Calu3 (cell line): ENCODE measurements at regions of chr6 and their contacts with region 1.

Region 1: DNA sequence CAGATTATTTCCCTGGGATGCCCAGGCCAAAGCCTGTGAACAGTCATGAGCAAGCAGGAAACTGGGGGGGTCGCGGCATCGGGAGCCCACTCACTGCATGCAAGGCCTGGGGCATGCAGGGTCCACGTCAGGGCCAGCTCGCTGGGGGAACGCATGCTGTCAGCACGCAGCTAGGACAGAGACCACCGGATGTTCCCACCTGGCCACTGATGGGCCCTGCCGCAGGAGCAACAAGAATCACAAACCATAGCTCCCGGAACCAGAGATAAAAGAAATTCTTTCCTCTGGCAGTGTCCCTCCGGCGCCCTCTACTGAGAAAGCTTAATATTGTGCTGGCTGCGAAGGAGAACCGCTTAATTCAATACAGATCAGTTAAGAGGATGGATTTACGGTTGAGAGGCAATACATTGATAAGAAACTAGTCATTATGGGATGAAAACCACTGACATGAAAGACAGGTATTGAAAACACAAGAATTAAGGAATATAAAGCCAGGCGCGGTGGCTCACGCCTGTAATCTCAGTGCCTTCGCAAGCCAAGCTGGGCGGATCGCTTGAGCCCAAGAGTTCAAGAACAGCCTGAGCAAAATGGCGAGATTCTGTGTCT is 32.6 kb downstream of the C6orf15 start:
- DNase-seq: peak; percentile 89
- H3K4me3 Mint-ChIP-seq: no peak overlapping the region
- H3K27ac Mint-ChIP-seq: no peak overlapping the region
- H3K4me1 Mint-ChIP-seq: peaks cover 8% of the 10 kb centered on the region
- H3K27me3 Mint-ChIP-seq: no peaks in the 10 kb centered on the region
- CTCF ChIP-seq: peak; percentile 89

Region 2: DNA sequence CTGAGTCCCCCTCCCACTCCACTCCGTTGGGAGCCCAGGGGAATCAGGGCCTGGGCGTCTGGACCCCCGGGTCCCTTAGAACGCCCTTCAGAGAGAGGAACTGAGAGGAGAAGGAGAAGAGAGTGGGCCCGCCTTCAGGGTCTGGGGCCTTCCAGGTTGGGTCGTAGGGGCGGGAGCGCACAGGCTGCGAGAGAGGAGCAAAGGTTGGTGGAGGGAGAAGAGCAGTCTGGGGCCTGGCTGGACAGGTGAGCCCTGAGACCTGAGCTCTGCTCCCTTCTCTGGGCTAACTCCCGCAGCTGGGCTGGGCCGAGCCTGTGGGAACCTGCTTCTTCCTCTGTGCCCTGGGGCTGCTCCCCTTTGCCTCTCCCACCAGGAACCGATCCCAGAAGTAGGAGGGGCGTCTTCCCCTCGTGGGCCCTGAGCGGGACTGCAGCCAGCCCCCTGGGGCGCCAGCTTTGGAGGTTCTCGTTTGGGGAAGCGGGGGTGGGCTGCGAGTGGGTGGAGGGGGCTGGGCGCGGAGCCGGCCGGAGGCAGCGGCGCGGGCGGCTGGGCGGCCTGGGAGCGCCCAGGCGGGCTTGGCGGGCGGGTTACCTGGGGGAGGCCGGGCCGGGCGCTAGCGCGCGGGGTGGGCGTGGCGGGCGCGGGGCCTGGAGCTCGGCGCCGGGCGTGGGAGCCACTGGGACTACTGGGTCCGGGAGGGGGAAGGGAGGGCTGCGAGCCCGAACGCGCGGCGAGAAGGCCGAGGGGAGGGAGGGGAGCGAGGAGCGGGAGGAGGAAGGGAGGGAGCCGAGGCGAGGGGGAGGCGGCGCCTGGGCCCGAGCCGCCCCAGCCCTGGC is 195.9 kb before region 1 on chr6 and contains the start of gene DDR1:
- CTCF ChIA-PET with region 1: interaction called, 15 read pairs
- intact Hi-C with region 1: no loop called
- DNase-seq: peak; percentile 82
- H3K4me3 Mint-ChIP-seq: peak within 1 kb of the TSS; percentile 89
- H3K27ac Mint-ChIP-seq: peak within 1 kb of the TSS; percentile 94
- H3K4me1 Mint-ChIP-seq: peaks cover 63% of the 10 kb centered on the region
- H3K27me3 Mint-ChIP-seq: peaks cover 16% of the 10 kb centered on the region
- CTCF ChIP-seq: no peak
- total RNA-seq, gene DDR1: 489 and 580 TPM in 2 replicates

Region 3: DNA sequence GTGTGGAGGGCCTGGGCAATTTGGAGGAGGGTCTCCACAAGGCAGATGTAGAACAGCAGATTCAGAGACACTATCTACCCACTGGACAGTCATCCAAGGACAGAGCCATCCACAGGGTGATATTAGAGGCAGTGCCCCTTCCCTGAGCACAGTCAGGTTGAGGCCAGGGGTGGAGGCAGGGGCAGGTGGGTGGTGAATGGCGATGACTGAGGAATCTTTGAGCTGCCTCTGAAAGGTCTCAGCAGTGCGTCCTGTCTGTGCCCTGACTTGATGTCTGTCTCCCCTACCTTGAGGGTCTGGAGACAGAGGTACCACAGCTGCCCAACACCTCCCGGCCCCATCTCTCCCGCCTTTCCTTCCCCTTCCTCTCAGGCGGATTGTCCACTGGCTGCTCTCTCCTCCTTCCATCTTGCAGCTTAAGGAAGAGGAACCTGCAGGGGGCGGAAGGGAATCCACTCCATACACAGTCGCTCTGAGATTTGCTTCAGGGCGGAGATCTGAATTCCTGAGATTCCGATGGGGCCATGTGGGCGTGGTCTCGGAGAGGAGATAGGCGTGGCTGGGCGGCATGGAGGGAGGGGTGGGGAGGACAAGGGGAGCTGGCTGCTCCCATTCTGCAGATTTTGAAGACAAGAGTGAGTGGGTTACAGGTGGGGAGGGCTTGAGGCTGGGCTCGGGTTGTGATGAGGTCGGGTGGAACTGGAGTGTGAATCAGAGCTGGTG is 137.3 kb before region 1 on chr6:
- CTCF ChIA-PET with region 1: interaction called, 10 read pairs
- intact Hi-C with region 1: no loop called
- DNase-seq: peak; percentile 99
- H3K4me3 Mint-ChIP-seq: peak overlapping the region; percentile 29
- H3K27ac Mint-ChIP-seq: peak overlapping the region; percentile 45
- H3K4me1 Mint-ChIP-seq: peaks cover 38% of the 10 kb centered on the region
- H3K27me3 Mint-ChIP-seq: peaks cover 10% of the 10 kb centered on the region
- CTCF ChIP-seq: peak; percentile 77

Region 4: DNA sequence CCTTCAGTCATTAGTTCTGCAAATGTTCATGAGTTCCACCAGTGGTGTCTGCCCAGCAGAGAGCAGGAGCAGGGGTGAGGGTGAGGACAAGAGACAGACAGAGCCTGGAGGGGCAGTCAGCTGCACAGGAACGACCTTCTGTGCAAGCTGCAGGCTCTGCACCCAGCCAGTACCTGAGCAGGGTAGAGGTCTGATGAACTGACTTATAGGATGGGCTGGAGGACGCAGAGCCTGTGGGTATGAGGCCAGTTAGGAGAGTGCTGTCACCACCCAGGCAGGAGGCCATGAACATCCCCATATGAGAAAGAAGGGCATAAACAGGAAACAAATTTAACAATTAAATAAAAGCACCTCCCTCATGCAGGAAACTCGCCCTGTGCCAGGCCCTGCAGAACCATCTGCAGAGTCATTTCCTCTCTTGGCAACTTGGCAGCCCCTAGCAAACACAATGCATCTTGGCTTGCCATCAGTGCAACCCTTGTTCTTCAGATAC is 14.7 kb after region 1 on chr6:
- CTCF ChIA-PET with region 1: interaction called, 10 read pairs
- intact Hi-C with region 1: no loop called
- DNase-seq: peak; percentile 53
- H3K4me3 Mint-ChIP-seq: no peak overlapping the region
- H3K27ac Mint-ChIP-seq: no peak overlapping the region
- H3K4me1 Mint-ChIP-seq: peaks cover 36% of the 10 kb centered on the region
- H3K27me3 Mint-ChIP-seq: no peaks in the 10 kb centered on the region
- CTCF ChIP-seq: no peak

Region 5: DNA sequence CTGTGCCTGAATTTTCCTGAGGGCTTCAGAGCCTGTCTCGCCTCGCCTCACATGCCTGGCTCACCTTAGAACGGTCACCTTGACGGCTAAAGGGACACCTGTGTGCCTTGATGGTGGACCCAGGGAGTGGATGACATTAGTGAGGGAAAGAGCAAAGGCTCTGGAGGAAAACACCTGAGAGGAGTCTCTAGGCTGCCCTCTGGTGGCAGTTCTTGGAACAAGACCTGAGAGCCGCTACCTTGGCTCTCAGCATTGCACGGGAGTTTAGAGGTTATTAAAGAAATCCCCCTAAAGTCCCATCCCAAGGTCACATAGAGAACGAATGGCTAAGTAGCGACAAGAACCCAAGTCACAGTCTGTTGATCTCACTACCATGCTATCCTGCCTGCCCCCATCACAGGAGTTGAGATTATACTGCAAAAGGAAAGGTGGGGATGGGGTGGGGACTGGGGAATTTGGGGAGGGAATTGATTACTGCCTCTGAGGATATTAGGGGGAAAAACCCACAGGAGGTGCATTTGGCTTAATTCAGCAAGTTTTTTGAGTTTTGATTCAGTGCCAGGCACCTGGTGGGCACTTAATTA is 48.4 kb after region 1 on chr6:
- CTCF ChIA-PET with region 1: interaction called, 11 read pairs
- intact Hi-C with region 1: no loop called
- DNase-seq: peak; percentile 92
- H3K4me3 Mint-ChIP-seq: no peak overlapping the region
- H3K27ac Mint-ChIP-seq: peak overlapping the region; percentile 45
- H3K4me1 Mint-ChIP-seq: peaks cover 50% of the 10 kb centered on the region
- H3K27me3 Mint-ChIP-seq: no peaks in the 10 kb centered on the region
- CTCF ChIP-seq: peak; percentile 99